SK-N-SH (cell line): ENCODE measurements at regions of chr2 and their contacts with region 1.

Region 1: DNA sequence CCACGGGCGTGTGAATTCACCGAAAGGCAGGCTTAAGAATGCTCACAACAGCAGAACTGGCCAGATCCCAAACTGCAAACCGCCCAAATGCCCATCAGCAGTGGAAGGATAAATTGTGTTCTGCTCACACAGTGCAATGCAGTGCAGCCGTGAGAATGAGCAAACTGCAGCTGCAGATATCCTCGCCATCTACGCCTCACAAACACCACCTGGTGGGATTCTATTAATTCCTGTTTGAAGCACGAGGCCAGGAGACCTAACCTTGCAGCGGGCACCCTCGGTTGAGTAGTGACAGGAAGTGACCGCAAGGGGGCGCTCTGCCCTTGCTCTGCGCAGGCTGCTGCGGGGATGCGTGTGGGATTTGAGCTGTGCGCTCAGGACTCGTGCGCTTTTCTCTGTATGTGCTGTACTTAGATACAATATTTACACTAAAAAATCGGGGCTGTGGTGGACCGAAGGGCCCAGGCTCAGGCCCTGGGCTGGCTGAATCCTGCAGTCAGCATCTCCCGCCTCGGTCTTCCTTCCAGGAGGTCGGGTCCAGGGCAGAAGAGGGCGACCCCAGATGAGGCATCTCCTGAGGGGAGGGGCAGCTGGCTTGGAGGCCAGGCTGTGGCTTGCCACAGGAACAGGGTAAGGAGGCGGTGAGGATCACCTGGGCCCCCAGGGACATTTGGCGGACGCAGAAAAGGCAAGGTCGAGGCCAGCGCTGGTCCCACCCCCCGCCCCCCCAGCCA is 19.8 kb upstream of the PDIA6 start:
- DNase-seq: peak; percentile 98
- H3K4me3 ChIP-seq: peak overlapping the region; percentile 14 to 33; a peak in 2 of 4 replicates
- H3K27ac ChIP-seq: no peak overlapping the region
- H3K4me1 ChIP-seq: peaks cover 0 to 29% of the 10 kb centered on the region in 2 experiments; a peak in 1 of 4 replicates
- H3K27me3 ChIP-seq: peaks cover 33% of the 10 kb centered on the region; the same call in 1 of the 2 replicates
- CTCF ChIP-seq: peak; percentile 99
- EP300 ChIP-seq: no peak
- RAD21 ChIP-seq: peak; percentile 100

Region 2: GRCh38 chr2:10385933-10386773 is 446.2 kb before region 1 on chr2:
- CTCF ChIA-PET with region 1: no interaction called
- POLR2A ChIA-PET with region 1: no interaction called
- DNase-seq: no peak
- H3K4me3 ChIP-seq: no peak overlapping the region
- H3K27ac ChIP-seq: peak overlapping the region in 1 of 2 experiments; percentile 12; a peak in 1 of 4 replicates
- H3K4me1 ChIP-seq: peaks cover 7 to 82% of the 10 kb centered on the region in 2 experiments; a peak in 3 of 4 replicates
- H3K27me3 ChIP-seq: no peaks in the 10 kb centered on the region
- CTCF ChIP-seq: no peak; the same call in 1 of the 2 replicates
- EP300 ChIP-seq: no peak
- RAD21 ChIP-seq: no peak

Region 3: DNA sequence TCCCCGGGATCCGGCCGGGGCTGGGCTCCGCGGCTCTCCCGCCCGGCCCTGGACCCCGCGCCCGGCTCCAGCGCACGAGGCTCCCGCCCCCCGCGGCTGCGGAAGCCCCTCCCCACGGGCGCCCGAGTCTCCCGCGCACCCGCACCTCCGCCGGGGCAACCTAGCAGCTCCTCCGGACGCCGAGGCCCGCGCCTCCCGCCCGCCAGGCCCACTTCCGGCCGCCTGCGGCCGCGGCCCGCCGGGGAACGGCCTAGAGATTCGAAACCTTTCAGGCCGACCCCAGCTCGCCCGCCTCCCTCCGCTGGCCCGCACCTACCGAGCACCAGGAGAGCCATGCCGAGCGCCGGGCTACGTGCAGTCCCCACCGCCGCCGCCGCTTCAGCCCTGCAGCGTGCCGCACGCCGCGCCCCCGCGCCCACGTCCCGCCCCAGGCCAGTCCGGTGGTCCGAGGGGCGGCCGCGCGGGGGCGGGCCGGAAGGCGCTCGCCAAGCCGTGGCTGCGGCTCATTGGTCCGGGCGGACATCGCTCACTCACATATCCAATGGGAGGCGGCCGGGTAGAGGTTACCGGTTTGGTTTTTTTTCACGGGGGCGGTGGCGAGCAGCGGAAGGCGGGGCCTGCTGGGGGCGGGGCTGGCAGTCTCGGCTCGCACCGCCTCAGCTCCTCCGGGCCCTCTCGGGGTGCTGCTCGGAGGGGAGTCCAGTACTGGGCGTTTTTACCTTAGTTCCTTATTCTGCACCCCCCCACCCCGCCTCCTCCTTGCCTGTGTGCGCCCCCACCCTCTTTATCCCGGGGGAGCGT is 19.8 kb before region 1 on chr2 and contains the start of gene PDIA6:
- CTCF ChIA-PET with region 1: interaction called, 216 read pairs
- POLR2A ChIA-PET with region 1: interaction called, 3 read pairs
- DNase-seq: peak; percentile 100
- H3K4me3 ChIP-seq: peak within 1 kb of the TSS; percentile 53 to 86
- H3K27ac ChIP-seq: peak within 1 kb of the TSS; percentile 68 to 93
- H3K4me1 ChIP-seq: peaks cover 0 to 47% of the 10 kb centered on the region in 2 experiments; a peak in 2 of 4 replicates
- H3K27me3 ChIP-seq: no peaks in the 10 kb centered on the region
- CTCF ChIP-seq: no peak
- EP300 ChIP-seq: peak in 1 of 2 experiments; percentile 32; a peak in 2 of 4 replicates
- RAD21 ChIP-seq: no peak
- polyA plus RNA-seq, gene PDIA6: 308 and 325 TPM in 2 replicates

Region 4: GRCh38 chr2:10873790-10874437 is 41.5 kb after region 1 on chr2:
- CTCF ChIA-PET with region 1: interaction called, 22 read pairs
- POLR2A ChIA-PET with region 1: no interaction called
- DNase-seq: no peak
- H3K4me3 ChIP-seq: no peak overlapping the region
- H3K27ac ChIP-seq: no peak overlapping the region
- H3K4me1 ChIP-seq: peaks cover 5 to 8% of the 10 kb centered on the region in 2 experiments; a peak in 3 of 4 replicates
- H3K27me3 ChIP-seq: no peaks in the 10 kb centered on the region
- CTCF ChIP-seq: no peak
- EP300 ChIP-seq: no peak
- RAD21 ChIP-seq: no peak

Region 5: GRCh38 chr2:10900216-10901109 is 68.1 kb after region 1 on chr2:
- CTCF ChIA-PET with region 1: interaction called, 192 read pairs
- POLR2A ChIA-PET with region 1: no interaction called
- DNase-seq: peak; percentile 79
- H3K4me3 ChIP-seq: no peak overlapping the region
- H3K27ac ChIP-seq: no peak overlapping the region
- H3K4me1 ChIP-seq: no peaks in the 10 kb centered on the region; a peak in 1 of 4 replicates
- H3K27me3 ChIP-seq: no peaks in the 10 kb centered on the region
- CTCF ChIP-seq: peak; percentile 63
- EP300 ChIP-seq: no peak
- RAD21 ChIP-seq: peak; percentile 58

Region 6: GRCh38 chr2:10931710-10932255 is 99.4 kb after region 1 on chr2:
- CTCF ChIA-PET with region 1: interaction called, 22 read pairs
- POLR2A ChIA-PET with region 1: no interaction called
- DNase-seq: no peak
- H3K4me3 ChIP-seq: no peak overlapping the region
- H3K27ac ChIP-seq: no peak overlapping the region
- H3K4me1 ChIP-seq: peaks cover 14 to 37% of the 10 kb centered on the region in 2 experiments; a peak in 3 of 4 replicates
- H3K27me3 ChIP-seq: no peaks in the 10 kb centered on the region
- CTCF ChIP-seq: no peak
- EP300 ChIP-seq: no peak
- RAD21 ChIP-seq: no peak

Region 7: DNA sequence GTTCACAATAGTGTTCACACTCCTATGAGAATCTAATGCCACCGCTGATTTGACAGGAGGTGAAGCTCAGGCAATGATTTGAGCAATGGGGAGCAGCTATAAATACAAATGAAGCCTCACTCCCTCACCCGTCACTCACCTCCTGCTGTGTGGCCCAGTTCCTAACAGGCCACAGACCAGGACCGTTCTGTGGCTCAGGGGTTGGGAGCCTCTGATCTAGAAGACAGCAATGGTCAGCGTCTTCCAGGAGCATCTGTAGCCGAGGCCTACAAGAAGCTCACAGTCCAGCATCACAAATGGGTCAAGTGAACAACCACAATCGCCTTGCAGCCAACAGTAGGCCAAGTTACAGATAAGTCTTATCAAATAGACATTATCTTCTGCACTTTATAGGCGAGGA is 212.9 kb after region 1 on chr2:
- CTCF ChIA-PET with region 1: interaction called, 11 read pairs
- POLR2A ChIA-PET with region 1: no interaction called
- DNase-seq: no peak
- H3K4me3 ChIP-seq: no peak overlapping the region
- H3K27ac ChIP-seq: no peak overlapping the region
- H3K4me1 ChIP-seq: no peaks in the 10 kb centered on the region; a peak in 1 of 4 replicates
- H3K27me3 ChIP-seq: no peaks in the 10 kb centered on the region; the same call in 1 of the 2 replicates
- CTCF ChIP-seq: no peak
- EP300 ChIP-seq: no peak
- RAD21 ChIP-seq: no peak

Region 8: DNA sequence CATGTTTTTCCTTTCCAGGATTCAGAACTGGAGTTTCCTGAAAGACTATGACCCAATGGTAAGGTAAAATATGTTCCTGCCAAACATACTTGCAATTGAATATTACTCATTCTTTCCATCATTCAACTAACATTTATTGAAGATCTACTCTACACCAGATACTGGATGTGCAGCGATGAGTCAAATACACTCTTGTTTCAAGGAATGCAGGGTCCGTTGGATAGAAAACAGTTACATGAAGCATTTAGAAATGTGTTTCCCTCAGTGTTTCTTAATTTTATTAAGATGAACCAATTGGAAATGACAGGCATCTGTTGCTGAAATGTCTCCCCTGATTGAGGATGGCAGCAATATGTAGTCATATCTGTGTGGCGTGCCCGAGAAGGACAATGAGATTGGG is 308.1 kb after region 1 on chr2:
- CTCF ChIA-PET with region 1: interaction called, 13 read pairs
- POLR2A ChIA-PET with region 1: no interaction called
- DNase-seq: no peak
- H3K4me3 ChIP-seq: no peak overlapping the region
- H3K27ac ChIP-seq: peak overlapping the region in 1 of 2 experiments; percentile 66; a peak in 2 of 4 replicates
- H3K4me1 ChIP-seq: no peaks in the 10 kb centered on the region
- H3K27me3 ChIP-seq: no peaks in the 10 kb centered on the region
- CTCF ChIP-seq: no peak
- EP300 ChIP-seq: peak in 1 of 2 experiments; percentile 85; a peak in 3 of 4 replicates
- RAD21 ChIP-seq: no peak